Natural killer cell (primary cell): ENCODE measurements at regions of chr15 and their contacts with region 1.

Region 1: GRCh38 chr15:94119923-94120775 is 111.2 kb upstream of the MCTP2 start:
- DNase-seq: peak; percentile 28 to 80
- ATAC-seq: peak; percentile 98 to 100 (median 100)
- H3K4me3 ChIP-seq: no peak overlapping the region
- H3K4me3 Mint-ChIP-seq: no peak overlapping the region
- H3K27ac ChIP-seq: no peak overlapping the region
- H3K27ac Mint-ChIP-seq: no peak overlapping the region
- H3K4me1 ChIP-seq: no peaks in the 10 kb centered on the region
- H3K4me1 Mint-ChIP-seq: no peaks in the 10 kb centered on the region
- H3K27me3 ChIP-seq: no peaks in the 10 kb centered on the region
- H3K27me3 Mint-ChIP-seq: peaks cover 2 to 4% of the 10 kb centered on the region in 2 donors
- CTCF ChIP-seq: peak; percentile 83

Region 2: GRCh38 chr15:93030430-93031105 is 1089.6 kb before region 1 on chr15:
- intact Hi-C with region 1: loop called (anchors 1 kb)
- DNase-seq: peak; percentile 65 to 85
- ATAC-seq: peak; percentile 84 to 96 (median 90)
- H3K4me3 ChIP-seq: no peak overlapping the region
- H3K4me3 Mint-ChIP-seq: no peak overlapping the region
- H3K27ac ChIP-seq: no peak overlapping the region
- H3K27ac Mint-ChIP-seq: peak overlapping the region; percentile 59 to 86
- H3K4me1 ChIP-seq: peaks cover 28% of the 10 kb centered on the region
- H3K4me1 Mint-ChIP-seq: peaks cover 18 to 37% of the 10 kb centered on the region in 2 donors
- H3K27me3 ChIP-seq: no peaks in the 10 kb centered on the region
- H3K27me3 Mint-ChIP-seq: no peaks in the 10 kb centered on the region
- CTCF ChIP-seq: peak; percentile 81

Region 3: GRCh38 chr15:93087825-93088199 is 1032.3 kb before region 1 on chr15:
- intact Hi-C with region 1: loop called (anchors 1 kb)
- DNase-seq: peak; percentile 69 to 88
- ATAC-seq: peak; percentile 85 to 87 (median 85)
- H3K4me3 ChIP-seq: no peak overlapping the region
- H3K4me3 Mint-ChIP-seq: peak overlapping the region; percentile 92
- H3K27ac ChIP-seq: no peak overlapping the region
- H3K27ac Mint-ChIP-seq: no peak overlapping the region
- H3K4me1 ChIP-seq: peaks cover 20% of the 10 kb centered on the region
- H3K4me1 Mint-ChIP-seq: peaks cover 13 to 15% of the 10 kb centered on the region in 2 donors
- H3K27me3 ChIP-seq: peaks cover 43% of the 10 kb centered on the region
- H3K27me3 Mint-ChIP-seq: peaks cover 50 to 52% of the 10 kb centered on the region in 2 donors
- CTCF ChIP-seq: peak; percentile 94

Region 4: DNA sequence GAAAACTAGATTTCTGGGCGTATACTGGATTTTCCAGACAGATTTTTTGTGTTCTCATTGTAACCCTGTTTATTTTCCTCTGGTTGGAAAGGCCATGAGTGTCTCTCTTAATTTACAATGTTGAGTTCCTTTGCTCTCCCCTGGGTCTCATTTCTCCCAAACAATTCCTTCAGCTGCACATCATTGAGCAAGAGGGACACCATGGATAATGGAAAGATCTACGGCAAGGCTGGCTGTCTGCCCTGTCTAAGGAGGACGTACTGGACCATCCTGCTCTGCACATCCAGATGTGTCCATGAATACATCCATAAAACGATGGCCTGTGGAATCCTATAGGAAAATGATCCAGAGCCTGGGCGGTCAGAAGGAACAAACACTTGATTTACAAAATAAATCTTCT is 146.9 kb before region 1 on chr15:
- intact Hi-C with region 1: no loop called
- DNase-seq: no peak
- ATAC-seq: no peak
- H3K4me3 ChIP-seq: no peak overlapping the region
- H3K4me3 Mint-ChIP-seq: no peak overlapping the region
- H3K27ac ChIP-seq: no peak overlapping the region
- H3K27ac Mint-ChIP-seq: no peak overlapping the region
- H3K4me1 ChIP-seq: no peaks in the 10 kb centered on the region
- H3K4me1 Mint-ChIP-seq: no peaks in the 10 kb centered on the region
- H3K27me3 ChIP-seq: no peaks in the 10 kb centered on the region
- H3K27me3 Mint-ChIP-seq: peaks cover 4 to 18% of the 10 kb centered on the region in 2 donors
- CTCF ChIP-seq: no peak

Region 5: DNA sequence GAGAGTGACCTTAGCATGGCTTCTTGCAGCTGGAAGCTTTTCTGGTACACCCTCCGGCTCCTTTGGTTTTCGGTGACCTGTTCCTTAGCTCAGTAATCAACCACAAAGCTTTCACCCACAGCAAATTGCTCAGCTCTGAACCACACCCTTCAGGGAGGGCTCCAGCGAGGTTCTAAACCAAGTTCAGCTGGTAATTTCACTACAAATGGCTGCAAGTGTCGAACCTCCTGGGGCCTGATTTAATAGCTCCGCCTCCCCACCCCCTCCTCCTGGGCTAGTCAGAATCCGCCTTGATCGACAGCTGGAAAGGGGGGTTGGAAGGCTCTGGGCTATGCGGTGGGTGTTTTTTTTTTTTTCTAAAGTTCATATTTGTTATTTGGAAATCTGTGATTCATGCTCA is 39.7 kb before region 1 on chr15:
- intact Hi-C with region 1: no loop called
- DNase-seq: peak in 1 of 2 donors; percentile 4
- ATAC-seq: peak in 1 of 3 donors; percentile 48
- H3K4me3 ChIP-seq: no peak overlapping the region
- H3K4me3 Mint-ChIP-seq: no peak overlapping the region
- H3K27ac ChIP-seq: no peak overlapping the region
- H3K27ac Mint-ChIP-seq: no peak overlapping the region
- H3K4me1 ChIP-seq: peaks cover 5% of the 10 kb centered on the region
- H3K4me1 Mint-ChIP-seq: peaks cover 0 to 9% of the 10 kb centered on the region in 2 donors
- H3K27me3 ChIP-seq: no peaks in the 10 kb centered on the region
- H3K27me3 Mint-ChIP-seq: peaks cover 8 to 16% of the 10 kb centered on the region in 2 donors
- CTCF ChIP-seq: no peak

Region 6: DNA sequence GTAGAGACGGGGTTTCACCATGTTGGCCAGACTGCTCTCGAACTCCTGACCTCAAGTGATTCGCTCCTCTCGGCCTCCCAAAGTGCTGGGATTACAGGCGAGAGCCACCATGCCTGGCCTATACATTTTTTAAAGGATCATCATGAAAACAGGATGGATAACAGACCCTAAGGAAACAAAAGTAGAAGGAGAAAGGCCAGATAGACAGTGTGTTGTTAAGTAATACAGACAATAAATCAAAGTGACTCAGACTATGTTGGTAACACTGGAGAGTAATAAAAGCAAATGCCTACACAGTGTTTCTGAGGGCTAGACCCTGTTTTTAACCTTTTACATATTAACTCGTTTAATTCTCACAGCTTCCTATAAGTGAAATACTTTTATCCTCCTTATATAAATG is 22.6 kb before region 1 on chr15:
- intact Hi-C with region 1: no loop called
- DNase-seq: no peak
- ATAC-seq: no peak
- H3K4me3 ChIP-seq: no peak overlapping the region
- H3K4me3 Mint-ChIP-seq: no peak overlapping the region
- H3K27ac ChIP-seq: no peak overlapping the region
- H3K27ac Mint-ChIP-seq: no peak overlapping the region
- H3K4me1 ChIP-seq: no peaks in the 10 kb centered on the region
- H3K4me1 Mint-ChIP-seq: no peaks in the 10 kb centered on the region
- H3K27me3 ChIP-seq: peaks cover 2% of the 10 kb centered on the region
- H3K27me3 Mint-ChIP-seq: peaks cover 14 to 48% of the 10 kb centered on the region in 2 donors
- CTCF ChIP-seq: no peak